ENCODE measurements at regions of chr6 and their contacts with region 1.

Region 1: DNA sequence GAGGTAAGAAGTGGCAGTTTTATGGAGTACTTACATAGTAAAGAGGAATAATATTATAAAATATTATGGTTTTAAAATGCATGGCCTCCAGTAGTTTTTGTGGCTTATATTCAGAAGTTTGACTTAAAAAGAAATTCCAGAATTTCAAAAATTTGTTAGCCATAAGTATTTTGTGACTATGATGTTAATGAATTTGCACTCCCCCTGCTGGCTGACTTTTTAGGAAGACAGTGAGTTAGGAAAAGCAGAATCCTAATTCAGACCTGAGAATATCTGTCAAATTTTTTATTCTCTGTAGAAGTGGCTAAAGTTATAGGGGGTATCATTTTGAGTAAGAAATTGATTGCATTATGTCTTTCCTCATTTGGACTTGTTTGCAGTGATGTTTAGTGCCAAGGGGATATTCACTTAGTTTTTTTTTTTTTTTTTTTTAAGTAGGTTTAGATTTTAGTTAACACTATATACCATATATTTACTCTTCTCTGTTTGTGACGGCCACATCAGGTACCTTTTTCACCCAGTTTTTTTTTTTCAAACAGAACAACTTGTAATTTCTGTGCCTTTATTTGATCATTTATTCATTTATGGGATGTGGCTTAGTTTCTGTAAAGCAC is 40.8 kb downstream of the ZFAND3 start:
- DNase-seq: peak; percentile 64
- H3K4me3 Mint-ChIP-seq: no peak overlapping the region
- H3K27ac Mint-ChIP-seq: no peak overlapping the region
- H3K4me1 Mint-ChIP-seq: peaks cover 25% of the 10 kb centered on the region
- H3K27me3 Mint-ChIP-seq: no peaks in the 10 kb centered on the region
- CTCF ChIP-seq: peak; percentile 40

Region 2: DNA sequence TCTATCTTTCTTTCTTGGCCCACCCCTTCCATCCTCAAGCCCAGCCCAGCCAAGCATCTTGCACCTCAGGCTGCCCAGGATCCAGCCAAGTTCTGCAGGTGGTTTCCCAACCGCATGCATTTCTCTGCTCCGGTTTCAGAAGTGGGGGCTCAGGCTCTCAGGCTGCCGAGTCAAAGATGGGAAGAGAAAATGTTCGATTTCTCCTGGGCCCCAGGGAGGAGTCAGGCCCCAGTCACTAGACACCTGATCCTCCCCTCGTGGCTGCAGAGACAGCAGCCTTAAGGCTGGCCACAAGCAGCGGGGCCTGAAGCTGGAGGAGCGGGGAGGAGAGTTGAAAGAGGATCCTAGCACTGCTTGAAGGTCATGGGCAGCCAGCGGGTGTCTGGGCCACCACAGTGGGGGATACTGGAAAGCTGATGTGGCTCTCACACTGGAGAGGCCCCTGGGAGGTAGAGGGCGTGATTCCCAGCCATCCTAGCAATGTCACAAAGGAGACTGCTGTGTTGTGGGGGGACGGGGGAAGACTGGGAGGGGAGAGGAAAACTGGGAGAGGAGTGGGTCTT is 83.0 kb before region 1 on chr6:
- CTCF ChIA-PET with region 1: no interaction called
- POLR2A ChIA-PET with region 1: no interaction called
- intact Hi-C with region 1: no loop called
- DNase-seq: no peak
- H3K4me3 Mint-ChIP-seq: no peak overlapping the region
- H3K27ac Mint-ChIP-seq: no peak overlapping the region
- H3K4me1 Mint-ChIP-seq: no peaks in the 10 kb centered on the region
- H3K27me3 Mint-ChIP-seq: peaks cover 15% of the 10 kb centered on the region
- CTCF ChIP-seq: no peak

Region 3: GRCh38 chr6:37791156-37791919 is 69.0 kb before region 1 on chr6:
- CTCF ChIA-PET with region 1: interaction called, 13 read pairs
- POLR2A ChIA-PET with region 1: no interaction called
- intact Hi-C with region 1: loop called (anchors 1 kb)
- DNase-seq: peak; percentile 97
- H3K4me3 Mint-ChIP-seq: no peak overlapping the region
- H3K27ac Mint-ChIP-seq: no peak overlapping the region
- H3K4me1 Mint-ChIP-seq: peaks cover 28% of the 10 kb centered on the region
- H3K27me3 Mint-ChIP-seq: no peaks in the 10 kb centered on the region
- CTCF ChIP-seq: peak; percentile 94

Region 4: GRCh38 chr6:37826188-37826587 is 34.1 kb before region 1 on chr6:
- CTCF ChIA-PET with region 1: interaction called, 17 read pairs
- POLR2A ChIA-PET with region 1: interaction called, 39 read pairs
- intact Hi-C with region 1: loop called (anchors 5 kb)
- DNase-seq: no peak
- H3K4me3 Mint-ChIP-seq: no peak overlapping the region
- H3K27ac Mint-ChIP-seq: no peak overlapping the region
- H3K4me1 Mint-ChIP-seq: peaks cover 34% of the 10 kb centered on the region
- H3K27me3 Mint-ChIP-seq: no peaks in the 10 kb centered on the region
- CTCF ChIP-seq: no peak

Region 5: GRCh38 chr6:37845026-37845911 is 15.1 kb before region 1 on chr6:
- CTCF ChIA-PET with region 1: interaction called, 11 read pairs
- POLR2A ChIA-PET with region 1: interaction called, 4 read pairs
- intact Hi-C with region 1: no loop called
- DNase-seq: no peak
- H3K4me3 Mint-ChIP-seq: no peak overlapping the region
- H3K27ac Mint-ChIP-seq: peak overlapping the region; percentile 12
- H3K4me1 Mint-ChIP-seq: peaks cover 36% of the 10 kb centered on the region
- H3K27me3 Mint-ChIP-seq: no peaks in the 10 kb centered on the region
- CTCF ChIP-seq: no peak

Measured in MCF 10A (cell line).